H1 (cell line): ENCODE measurements at regions of chr20 and their contacts with region 1.

Region 1: GRCh38 chr20:63223221-63224207 is 7.6 kb upstream of the YTHDF1 start:
- DNase-seq: peak in 1 of 2 experiments; percentile 86
- H3K4me3 ChIP-seq: no peak overlapping the region
- H3K27ac ChIP-seq: no peak overlapping the region
- H3K4me1 ChIP-seq: peaks cover 0 to 6% (median 3%) of the 10 kb centered on the region in 4 experiments; a peak in 5 of 7 replicates
- H3K27me3 ChIP-seq: peaks cover 0 to 3% (median 0%) of the 10 kb centered on the region in 4 experiments; a peak in 2 of 7 replicates
- CTCF ChIP-seq: peak; percentile 85 to 87 (median 87)
- EP300 ChIP-seq: no peak
- POLR2A ChIP-seq: no peak
- RAD21 ChIP-seq: peak; percentile 85 to 89

Region 2: GRCh38 chr20:63093966-63094766 is 129.3 kb before region 1 on chr20:
- CTCF ChIA-PET with region 1: no interaction called
- POLR2A ChIA-PET with region 1: no interaction called
- DNase-seq: peak in 1 of 2 experiments; percentile 43
- H3K4me3 ChIP-seq: no peak overlapping the region
- H3K27ac ChIP-seq: no peak overlapping the region
- H3K4me1 ChIP-seq: no peaks in the 10 kb centered on the region; a peak in 2 of 7 replicates
- H3K27me3 ChIP-seq: peaks cover 0 to 4% (median 3%) of the 10 kb centered on the region in 4 experiments; a peak in 3 of 7 replicates
- CTCF ChIP-seq: no peak
- EP300 ChIP-seq: no peak
- POLR2A ChIP-seq: no peak
- RAD21 ChIP-seq: no peak

Region 3: DNA sequence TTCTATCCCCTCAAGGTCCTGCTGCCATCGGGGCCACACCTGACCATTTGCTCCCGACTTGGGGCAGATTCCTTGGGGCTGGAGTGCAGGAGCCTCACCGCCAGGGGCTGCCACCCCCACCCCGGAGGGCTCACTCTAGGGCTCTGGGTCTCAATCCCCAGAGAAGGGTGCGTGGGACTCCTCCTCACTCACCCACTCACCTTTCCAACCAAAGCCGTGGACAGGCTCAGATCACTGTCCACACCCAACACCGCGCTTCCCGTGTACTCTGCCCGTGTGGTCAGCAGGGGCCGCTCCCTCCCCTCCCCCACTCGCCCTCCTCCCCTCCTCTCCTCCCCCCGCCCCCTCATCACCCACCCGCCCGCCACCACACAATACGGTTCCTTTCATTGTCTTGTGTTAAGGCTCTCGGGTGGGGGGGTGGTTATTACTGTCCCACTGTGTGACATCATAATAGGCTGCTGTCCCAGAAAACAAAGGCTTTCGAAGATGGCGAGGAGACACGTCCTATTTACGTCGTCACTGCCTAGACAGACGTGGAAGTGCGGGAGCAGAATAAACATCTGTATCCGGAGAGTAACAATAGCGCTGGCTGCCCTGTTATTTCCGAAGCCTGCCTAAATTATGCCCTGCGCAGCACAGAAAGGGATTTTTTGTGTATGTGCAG is 93.4 kb before region 1 on chr20:
- CTCF ChIA-PET with region 1: no interaction called
- POLR2A ChIA-PET with region 1: no interaction called
- DNase-seq: no peak
- H3K4me3 ChIP-seq: peak overlapping the region in 1 of 4 experiments; percentile 8; a peak in 2 of 8 replicates
- H3K27ac ChIP-seq: no peak overlapping the region
- H3K4me1 ChIP-seq: peaks cover 0 to 15% (median 2%) of the 10 kb centered on the region in 4 experiments; a peak in 4 of 7 replicates
- H3K27me3 ChIP-seq: no peaks in the 10 kb centered on the region; a peak in 1 of 7 replicates
- CTCF ChIP-seq: peak; percentile 11 to 36 (median 30)
- EP300 ChIP-seq: no peak
- POLR2A ChIP-seq: no peak
- RAD21 ChIP-seq: no peak

Region 4: GRCh38 chr20:63172720-63173119 is 50.8 kb before region 1 on chr20:
- CTCF ChIA-PET with region 1: interaction called, 12 read pairs
- POLR2A ChIA-PET with region 1: interaction called, 5 read pairs
- DNase-seq: peak in 1 of 2 experiments; percentile 82
- H3K4me3 ChIP-seq: no peak overlapping the region
- H3K27ac ChIP-seq: no peak overlapping the region
- H3K4me1 ChIP-seq: peaks cover 3 to 44% (median 25%) of the 10 kb centered on the region in 4 experiments
- H3K27me3 ChIP-seq: peaks cover 30 to 55% (median 44%) of the 10 kb centered on the region in 4 experiments
- CTCF ChIP-seq: peak; percentile 60 to 82 (median 81)
- EP300 ChIP-seq: no peak
- POLR2A ChIP-seq: no peak
- RAD21 ChIP-seq: peak; percentile 68 to 80

Region 5: DNA sequence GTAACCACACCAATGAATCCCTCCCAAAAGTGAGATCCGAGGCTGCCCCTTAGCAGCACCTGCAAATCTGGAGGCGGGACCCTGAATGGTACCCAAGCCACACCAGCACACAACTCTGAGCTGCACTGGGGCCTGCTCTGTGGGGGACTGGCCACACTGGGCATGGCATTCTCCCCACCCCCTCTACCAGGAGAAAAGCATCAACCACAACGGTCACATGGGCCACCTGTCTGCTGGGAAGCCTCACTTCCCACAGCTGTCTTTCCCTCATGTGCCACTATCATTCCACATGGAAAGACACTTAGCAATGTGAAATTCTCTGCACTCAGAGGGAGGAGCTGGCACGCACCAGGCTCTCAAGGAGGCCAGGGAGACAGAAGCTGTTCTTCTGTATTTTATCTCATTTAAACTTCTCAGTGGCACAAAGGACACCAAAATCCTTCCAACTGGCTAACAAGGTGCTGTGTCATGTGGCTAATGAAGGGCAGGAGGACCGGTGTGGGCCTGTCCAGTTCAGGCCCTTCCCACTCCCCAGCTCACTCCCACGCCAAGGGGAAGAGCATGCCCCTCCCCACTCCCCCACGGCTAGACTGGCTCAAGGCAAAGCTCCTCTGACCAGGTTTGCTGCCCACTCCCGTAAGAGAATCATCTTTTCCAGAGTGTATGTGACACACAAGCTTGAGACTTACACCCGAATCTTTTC is 26.6 kb before region 1 on chr20:
- CTCF ChIA-PET with region 1: interaction called, 49 read pairs
- POLR2A ChIA-PET with region 1: interaction called, 3 read pairs
- DNase-seq: no peak
- H3K4me3 ChIP-seq: no peak overlapping the region
- H3K27ac ChIP-seq: no peak overlapping the region
- H3K4me1 ChIP-seq: peaks cover 0 to 2% (median 0%) of the 10 kb centered on the region in 4 experiments; a peak in 3 of 7 replicates
- H3K27me3 ChIP-seq: no peaks in the 10 kb centered on the region
- CTCF ChIP-seq: no peak
- EP300 ChIP-seq: no peak
- POLR2A ChIP-seq: no peak
- RAD21 ChIP-seq: no peak

Region 6: DNA sequence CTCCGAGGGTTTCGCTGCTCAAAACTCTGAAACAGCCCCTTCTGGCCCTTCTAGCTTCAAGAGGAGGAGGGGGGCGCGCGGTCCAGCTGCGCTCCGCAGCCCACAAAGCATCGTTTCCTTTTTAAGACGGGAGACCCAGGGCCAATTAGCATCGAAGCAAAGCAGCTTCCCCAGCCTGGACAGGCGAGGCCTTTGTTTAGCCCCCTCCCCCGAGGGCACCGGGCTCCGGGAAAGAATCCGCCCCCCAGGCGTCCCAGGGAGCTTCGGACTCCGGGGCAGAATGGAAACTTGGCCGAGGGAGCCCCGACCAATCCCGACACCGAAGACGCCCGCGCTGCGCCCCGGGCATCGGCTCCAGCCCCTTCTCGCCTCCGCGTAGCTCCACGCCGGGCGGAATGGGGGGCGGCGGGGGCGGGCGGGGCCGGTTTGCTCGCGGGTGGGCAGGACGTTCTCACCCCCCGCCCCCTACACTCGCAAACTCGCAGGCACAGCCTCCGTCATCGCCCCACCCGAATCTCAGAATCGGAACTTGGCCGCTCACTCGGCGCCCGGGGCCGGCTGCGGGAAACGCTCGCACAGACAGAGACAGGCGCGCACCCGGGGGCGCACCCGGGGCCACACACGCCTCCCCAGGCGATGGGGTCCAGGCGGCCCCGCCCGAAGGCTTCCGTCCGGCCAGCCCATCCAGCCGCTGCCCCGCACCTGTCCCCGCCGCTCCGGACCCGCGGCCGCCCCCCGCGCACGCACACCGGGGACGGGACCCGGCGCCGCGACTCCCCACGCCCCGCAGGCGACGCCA is 30.1 kb after region 1 on chr20:
- CTCF ChIA-PET with region 1: interaction called, 103 read pairs
- POLR2A ChIA-PET with region 1: interaction called, 12 read pairs
- DNase-seq: peak in 1 of 2 experiments; percentile 82
- H3K4me3 ChIP-seq: peak overlapping the region; percentile 36 to 67 (median 54)
- H3K27ac ChIP-seq: no peak overlapping the region
- H3K4me1 ChIP-seq: peaks cover 2 to 18% (median 15%) of the 10 kb centered on the region in 4 experiments
- H3K27me3 ChIP-seq: peaks cover 4 to 51% (median 40%) of the 10 kb centered on the region in 4 experiments
- CTCF ChIP-seq: no peak
- EP300 ChIP-seq: no peak
- POLR2A ChIP-seq: no peak
- RAD21 ChIP-seq: no peak; a peak in 1 of 4 replicates

Region 7: DNA sequence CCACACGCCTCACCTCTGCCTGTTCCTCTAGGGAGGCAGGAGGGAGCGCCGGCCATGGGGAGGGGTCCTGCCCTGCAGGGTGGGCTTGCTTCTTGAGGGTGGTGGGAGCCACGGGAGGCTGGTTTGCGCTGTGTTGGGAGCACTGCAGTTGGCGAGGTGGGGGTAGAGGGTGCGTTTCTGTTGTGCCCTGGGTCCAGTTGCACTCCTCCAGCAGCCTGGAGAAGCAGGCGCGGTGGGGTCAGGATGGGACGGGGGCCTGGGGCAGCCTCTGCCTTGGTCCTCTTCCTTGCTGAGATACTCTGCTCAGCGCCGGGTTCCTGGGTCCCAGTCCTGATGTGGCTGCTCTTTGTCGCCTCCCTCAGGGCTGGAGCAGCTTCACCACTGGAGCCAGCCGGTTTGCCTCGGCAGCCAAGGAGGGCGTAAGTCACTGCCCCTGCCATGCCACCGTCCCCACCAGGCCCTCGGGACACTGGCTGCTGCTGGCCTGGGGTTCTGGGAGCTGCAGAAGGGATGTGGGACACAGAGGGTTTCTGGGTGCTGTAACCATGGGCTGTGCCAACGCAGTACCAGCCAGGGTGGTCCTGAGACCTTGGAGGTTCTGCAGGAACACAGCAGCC is 57.5 kb after region 1 on chr20:
- CTCF ChIA-PET with region 1: interaction called, 82 read pairs
- POLR2A ChIA-PET with region 1: interaction called, 3 read pairs
- DNase-seq: no peak
- H3K4me3 ChIP-seq: no peak overlapping the region
- H3K27ac ChIP-seq: no peak overlapping the region
- H3K4me1 ChIP-seq: no peaks in the 10 kb centered on the region
- H3K27me3 ChIP-seq: no peaks in the 10 kb centered on the region
- CTCF ChIP-seq: peak; percentile 74 to 84 (median 83)
- EP300 ChIP-seq: no peak
- POLR2A ChIP-seq: no peak
- RAD21 ChIP-seq: peak; percentile 51 to 63

Region 8: DNA sequence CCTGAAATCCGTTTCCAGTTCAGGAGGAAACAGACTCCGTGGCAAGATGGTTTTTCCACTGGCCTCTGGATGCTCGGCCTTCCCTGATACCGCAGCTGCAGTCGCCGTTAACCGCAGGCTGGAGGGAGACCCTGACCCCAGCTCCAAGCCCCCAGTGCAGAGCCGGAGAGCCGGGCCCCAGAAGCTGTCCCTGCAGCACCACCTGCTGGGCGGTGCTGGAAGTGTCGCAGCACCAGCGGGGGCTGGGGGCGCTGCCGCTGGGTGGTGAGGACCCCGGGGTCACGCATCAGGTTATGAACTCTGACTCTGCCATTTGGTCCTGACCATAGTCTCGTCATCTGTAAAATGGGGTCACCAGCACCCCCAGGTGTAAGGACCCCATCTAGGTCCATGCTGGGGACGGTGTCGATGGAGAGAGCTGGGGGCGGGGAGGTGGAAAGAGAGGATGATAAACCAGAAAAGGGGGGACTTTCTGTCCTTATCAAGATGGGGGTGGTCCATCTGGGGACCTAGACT is 158.4 kb after region 1 on chr20:
- CTCF ChIA-PET with region 1: interaction called, 18 read pairs
- POLR2A ChIA-PET with region 1: no interaction called
- DNase-seq: peak in 1 of 2 experiments; percentile 93
- H3K4me3 ChIP-seq: no peak overlapping the region
- H3K27ac ChIP-seq: no peak overlapping the region
- H3K4me1 ChIP-seq: peaks cover 3 to 20% (median 14%) of the 10 kb centered on the region in 4 experiments
- H3K27me3 ChIP-seq: peaks cover 0 to 2% (median 0%) of the 10 kb centered on the region in 4 experiments; a peak in 1 of 7 replicates
- CTCF ChIP-seq: peak; percentile 94 to 98 (median 96)
- EP300 ChIP-seq: no peak
- POLR2A ChIP-seq: no peak
- RAD21 ChIP-seq: peak; percentile 95 to 97

Region 9: GRCh38 chr20:63519721-63520503 is 296.4 kb after region 1 on chr20:
- CTCF ChIA-PET with region 1: no interaction called
- POLR2A ChIA-PET with region 1: no interaction called
- DNase-seq: peak in 1 of 2 experiments; percentile 86
- H3K4me3 ChIP-seq: peak overlapping the region; percentile 66 to 99 (median 88)
- H3K27ac ChIP-seq: no peak overlapping the region
- H3K4me1 ChIP-seq: peaks cover 0 to 21% (median 10%) of the 10 kb centered on the region in 4 experiments; a peak in 5 of 7 replicates
- H3K27me3 ChIP-seq: peaks cover 0 to 6% (median under 1%) of the 10 kb centered on the region in 4 experiments; a peak in 2 of 7 replicates
- CTCF ChIP-seq: 0 out of 4 replicates have a peak, but pooled peaks of 1 of the 3 experiments have one; percentile 4
- EP300 ChIP-seq: no peak
- POLR2A ChIP-seq: peak in 1 of 2 experiments; percentile 36; a peak in 1 of 3 replicates
- RAD21 ChIP-seq: no peak